Sigmoid colon (tissue), 7 donors: ENCODE measurements at regions of chr10 and their contacts with region 1.

Region 1: GRCh38 chr10:78047314-78047891 is 13.7 kb downstream of the RPS24 start:
- DNase-seq: peak; percentile 91
- H3K4me3 ChIP-seq: no peak overlapping the region
- H3K27ac ChIP-seq: peak overlapping the region in 1 of 4 donors; percentile 6
- H3K4me1 ChIP-seq: peaks cover 0 to 16% (median 9%) of the 10 kb centered on the region in 4 donors
- H3K27me3 ChIP-seq: no peaks in the 10 kb centered on the region
- CTCF ChIP-seq: peak; percentile 83 to 88 (median 86)
- EP300 ChIP-seq: no peak
- POLR2A ChIP-seq: no peak

Region 2: GRCh38 chr10:78121801-78122200 is 74.4 kb after region 1 on chr10:
- intact Hi-C with region 1: no loop called
- DNase-seq: no peak
- H3K4me3 ChIP-seq: no peak overlapping the region
- H3K27ac ChIP-seq: no peak overlapping the region
- H3K4me1 ChIP-seq: no peaks in the 10 kb centered on the region
- H3K27me3 ChIP-seq: no peaks in the 10 kb centered on the region
- CTCF ChIP-seq: no peak
- EP300 ChIP-seq: no peak
- POLR2A ChIP-seq: no peak

Region 3: GRCh38 chr10:78657163-78657861 is 609.9 kb after region 1 on chr10:
- intact Hi-C with region 1: loop called (anchors 5 kb)
- DNase-seq: peak; percentile 91
- H3K4me3 ChIP-seq: no peak overlapping the region
- H3K27ac ChIP-seq: peak overlapping the region in 3 of 4 donors; percentile 61 to 73 (median 70)
- H3K4me1 ChIP-seq: peaks cover 0 to 39% (median 18%) of the 10 kb centered on the region in 4 donors
- H3K27me3 ChIP-seq: no peaks in the 10 kb centered on the region
- CTCF ChIP-seq: peak; percentile 46 to 74 (median 60)
- EP300 ChIP-seq: no peak
- POLR2A ChIP-seq: no peak